Activated B cell treated with CpG ODN at 0.5 μM for 24 hours (primary cell): ENCODE measurements at regions of chr16 and their contacts with region 1.

Region 1: DNA sequence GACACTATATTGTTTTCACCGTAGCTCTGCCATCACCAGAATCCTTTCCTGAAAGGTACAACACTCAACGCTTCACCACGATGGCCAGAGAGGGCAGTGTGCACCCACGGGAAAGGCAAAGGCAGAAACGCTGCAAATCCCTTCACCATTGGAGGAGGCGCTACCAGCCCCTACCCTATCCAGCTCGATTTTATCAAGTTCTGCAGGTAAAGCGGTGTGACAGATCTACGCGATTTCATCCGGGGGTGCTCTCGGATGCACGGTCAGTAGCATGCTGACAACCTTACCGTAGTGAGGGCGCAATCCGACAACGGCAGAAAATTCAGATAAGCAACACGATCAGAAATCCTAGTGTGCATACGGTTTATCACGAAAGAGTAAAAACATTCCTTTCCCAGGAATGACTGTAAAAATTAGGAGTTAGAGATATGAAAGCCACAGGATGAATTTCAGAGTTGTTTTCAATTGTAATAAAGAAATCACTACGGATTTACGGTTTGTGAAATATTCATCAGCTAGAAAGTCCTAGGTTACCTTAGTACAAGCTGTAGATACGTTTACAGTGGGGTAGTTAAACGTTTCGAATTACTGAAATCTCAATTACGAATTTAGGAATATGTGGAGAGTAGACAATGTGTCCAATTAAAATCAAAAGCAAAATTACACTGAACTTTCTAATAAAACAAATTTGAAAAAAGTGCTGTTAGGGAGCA is 1.8 kb downstream of the NETO2 start:
- DNase-seq: peak; percentile 69
- ATAC-seq: peak; percentile 53
- H3K4me3 Mint-ChIP-seq: peak overlapping the region; percentile 86
- H3K27ac Mint-ChIP-seq: peak overlapping the region; percentile 59
- H3K4me1 Mint-ChIP-seq: peaks cover 23% of the 10 kb centered on the region
- H3K27me3 Mint-ChIP-seq: no peaks in the 10 kb centered on the region
- CTCF ChIP-seq: no peak

Region 2: DNA sequence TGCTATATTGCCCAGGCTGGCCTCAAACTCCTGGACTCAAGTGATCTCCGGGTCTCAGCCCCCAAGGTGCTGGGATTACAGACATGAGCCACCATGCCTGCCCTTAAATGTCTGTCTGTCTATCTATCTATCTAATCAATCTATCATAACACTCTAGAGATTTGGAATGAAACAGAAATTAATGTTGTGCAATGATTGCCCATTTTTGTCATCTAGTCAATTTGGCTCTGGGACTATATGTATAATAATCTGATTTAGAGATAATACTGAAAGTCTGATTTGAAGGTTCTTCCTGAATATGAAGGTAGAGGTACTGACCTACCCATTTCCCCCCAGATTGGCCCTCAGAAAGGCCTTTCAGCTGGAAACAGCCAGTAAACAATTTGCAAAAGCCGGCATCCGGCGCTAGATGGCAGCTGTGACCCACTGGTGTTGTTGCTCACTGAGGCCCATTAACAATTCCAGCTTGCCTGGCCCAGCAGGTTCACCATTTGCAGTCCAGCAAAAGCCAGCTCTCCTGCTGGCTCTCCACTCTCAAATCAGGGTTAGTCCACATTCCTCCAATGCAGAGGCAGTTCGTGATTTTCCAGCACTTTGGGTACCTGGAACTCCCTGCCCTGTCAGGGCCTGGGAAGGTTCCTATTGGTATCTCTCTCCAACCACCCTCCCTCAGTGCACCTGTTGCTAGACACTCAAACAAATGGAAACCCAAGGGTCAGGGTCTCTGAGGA is 288.1 kb before region 1 on chr16:
- CTCF ChIA-PET with region 1: interaction called, 7 read pairs
- POLR2A ChIA-PET with region 1: no interaction called
- intact Hi-C with region 1: loop called (anchors 1 kb)
- DNase-seq: peak; percentile 53
- ATAC-seq: peak; percentile 72
- H3K4me3 Mint-ChIP-seq: no peak overlapping the region
- H3K27ac Mint-ChIP-seq: no peak overlapping the region
- H3K4me1 Mint-ChIP-seq: peaks cover 17% of the 10 kb centered on the region
- H3K27me3 Mint-ChIP-seq: no peaks in the 10 kb centered on the region
- CTCF ChIP-seq: peak; percentile 63

Region 3: GRCh38 chr16:47037746-47038458 is 104.0 kb before region 1 on chr16:
- CTCF ChIA-PET with region 1: interaction called, 33 read pairs
- POLR2A ChIA-PET with region 1: interaction called, 7 read pairs
- intact Hi-C with region 1: loop called (anchors 1 kb)
- DNase-seq: peak; percentile 94
- ATAC-seq: peak; percentile 96
- H3K4me3 Mint-ChIP-seq: peak overlapping the region; percentile 81
- H3K27ac Mint-ChIP-seq: no peak overlapping the region
- H3K4me1 Mint-ChIP-seq: peaks cover 19% of the 10 kb centered on the region
- H3K27me3 Mint-ChIP-seq: peaks cover 2% of the 10 kb centered on the region
- CTCF ChIP-seq: peak; percentile 99

Region 4: GRCh38 chr16:47058295-47059086 is 83.4 kb before region 1 on chr16:
- CTCF ChIA-PET with region 1: no interaction called
- POLR2A ChIA-PET with region 1: no interaction called
- intact Hi-C with region 1: no loop called
- DNase-seq: no peak
- ATAC-seq: no peak
- H3K4me3 Mint-ChIP-seq: no peak overlapping the region
- H3K27ac Mint-ChIP-seq: no peak overlapping the region
- H3K4me1 Mint-ChIP-seq: no peaks in the 10 kb centered on the region
- H3K27me3 Mint-ChIP-seq: no peaks in the 10 kb centered on the region
- CTCF ChIP-seq: no peak

Region 5: DNA sequence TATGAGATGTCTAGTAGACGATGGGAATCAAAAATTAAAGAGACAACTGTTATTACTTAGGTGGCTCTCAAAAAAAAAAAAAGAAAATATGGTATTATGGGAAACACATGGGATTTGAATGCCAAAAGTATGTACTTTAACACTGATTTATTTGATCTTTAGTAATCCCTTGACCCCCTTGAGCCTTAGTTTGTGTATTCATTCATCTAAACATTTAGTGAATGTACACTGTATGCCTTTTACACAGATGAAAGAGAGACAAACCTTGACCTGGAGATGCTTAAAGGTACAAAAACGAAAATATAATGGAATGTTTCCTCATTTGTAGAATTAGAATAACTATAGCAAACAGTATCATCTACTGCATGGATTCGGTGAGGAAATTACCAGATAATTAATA is 40.4 kb after region 1 on chr16:
- CTCF ChIA-PET with region 1: no interaction called
- POLR2A ChIA-PET with region 1: no interaction called
- intact Hi-C with region 1: no loop called
- DNase-seq: no peak
- ATAC-seq: no peak
- H3K4me3 Mint-ChIP-seq: no peak overlapping the region
- H3K27ac Mint-ChIP-seq: no peak overlapping the region
- H3K4me1 Mint-ChIP-seq: no peaks in the 10 kb centered on the region
- H3K27me3 Mint-ChIP-seq: no peaks in the 10 kb centered on the region
- CTCF ChIP-seq: no peak

Region 6: DNA sequence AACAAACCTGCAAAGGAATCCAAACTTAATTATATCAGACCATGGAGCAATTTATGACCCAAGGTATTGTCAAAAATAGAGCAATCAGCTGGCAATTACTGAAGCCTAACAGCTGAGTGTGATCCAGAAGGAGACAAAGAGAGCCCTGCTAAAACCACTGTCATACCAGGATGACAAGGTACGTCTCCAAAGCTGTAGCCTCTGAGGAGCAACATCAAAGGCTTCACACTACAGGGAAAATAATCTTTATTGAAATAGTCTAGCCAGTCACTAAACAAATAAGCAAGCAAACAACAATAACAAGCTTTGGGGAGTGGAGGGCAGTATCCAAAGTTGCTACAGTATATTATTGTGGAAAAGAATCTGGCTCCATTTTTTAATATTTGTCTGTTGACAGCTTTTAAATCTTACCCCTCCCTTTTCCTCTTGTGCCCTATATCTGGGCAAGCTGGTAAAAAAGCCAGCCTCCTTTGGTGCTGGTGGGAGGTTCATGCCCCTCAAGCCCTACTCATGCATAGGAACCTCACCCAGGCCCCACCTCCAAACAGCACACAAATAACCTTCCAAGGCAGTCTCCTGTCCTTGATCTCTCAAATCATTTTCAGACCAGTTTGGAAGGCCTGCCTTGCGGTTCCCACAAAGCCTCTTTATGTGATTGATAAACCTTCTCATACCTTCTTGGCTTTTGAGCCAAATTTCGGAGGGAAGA is 245.3 kb after region 1 on chr16:
- CTCF ChIA-PET with region 1: no interaction called
- POLR2A ChIA-PET with region 1: no interaction called
- intact Hi-C with region 1: no loop called
- DNase-seq: no peak
- ATAC-seq: no peak
- H3K4me3 Mint-ChIP-seq: no peak overlapping the region
- H3K27ac Mint-ChIP-seq: no peak overlapping the region
- H3K4me1 Mint-ChIP-seq: peaks cover 4% of the 10 kb centered on the region
- H3K27me3 Mint-ChIP-seq: no peaks in the 10 kb centered on the region
- CTCF ChIP-seq: no peak

Region 7: GRCh38 chr16:48117217-48118105 is 975.5 kb after region 1 on chr16:
- CTCF ChIA-PET with region 1: interaction called, 15 read pairs
- POLR2A ChIA-PET with region 1: no interaction called
- intact Hi-C with region 1: loop called (anchors 1 kb)
- DNase-seq: peak; percentile 36
- ATAC-seq: peak; percentile 75
- H3K4me3 Mint-ChIP-seq: no peak overlapping the region
- H3K27ac Mint-ChIP-seq: no peak overlapping the region
- H3K4me1 Mint-ChIP-seq: no peaks in the 10 kb centered on the region
- H3K27me3 Mint-ChIP-seq: peaks cover 1% of the 10 kb centered on the region
- CTCF ChIP-seq: no peak

Region 8: DNA sequence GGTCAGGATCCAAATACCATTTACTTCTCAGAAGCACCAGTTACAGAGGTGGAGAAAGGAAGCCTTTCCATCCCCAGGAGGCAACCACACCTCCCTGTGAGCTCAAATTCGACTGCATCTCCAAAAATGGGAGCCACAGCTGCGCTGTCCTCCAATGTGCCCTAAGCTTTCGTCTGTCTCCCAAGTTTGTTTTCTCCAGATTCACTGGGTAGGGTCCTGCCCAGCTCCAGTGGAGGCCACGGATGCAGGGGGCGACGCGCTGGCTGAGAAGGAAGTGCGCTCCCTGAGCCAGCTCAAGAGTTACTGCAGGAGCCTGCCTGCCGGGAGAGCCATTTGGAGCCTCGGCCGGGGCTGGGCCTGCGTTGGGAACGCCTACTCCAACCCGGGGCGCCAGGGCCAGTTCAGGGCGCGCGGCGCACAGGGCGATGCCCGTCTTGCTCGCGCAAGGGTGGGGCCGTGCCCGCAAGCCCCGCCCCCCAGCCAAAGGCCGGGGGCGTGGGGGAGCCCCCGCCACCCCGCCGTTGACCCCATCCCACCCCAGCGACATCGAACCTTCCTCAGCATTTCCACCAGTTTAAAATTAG is 1223.7 kb after region 1 on chr16:
- CTCF ChIA-PET with region 1: no interaction called
- POLR2A ChIA-PET with region 1: no interaction called
- intact Hi-C with region 1: loop called (anchors 5 kb)
- DNase-seq: peak; percentile 74
- ATAC-seq: peak; percentile 94
- H3K4me3 Mint-ChIP-seq: peak overlapping the region; percentile 88
- H3K27ac Mint-ChIP-seq: peak overlapping the region; percentile 96
- H3K4me1 Mint-ChIP-seq: peaks cover 65% of the 10 kb centered on the region
- H3K27me3 Mint-ChIP-seq: no peaks in the 10 kb centered on the region
- CTCF ChIP-seq: no peak